ENCODE measurements at regions of chr6 and their contacts with region 1.

Region 1: DNA sequence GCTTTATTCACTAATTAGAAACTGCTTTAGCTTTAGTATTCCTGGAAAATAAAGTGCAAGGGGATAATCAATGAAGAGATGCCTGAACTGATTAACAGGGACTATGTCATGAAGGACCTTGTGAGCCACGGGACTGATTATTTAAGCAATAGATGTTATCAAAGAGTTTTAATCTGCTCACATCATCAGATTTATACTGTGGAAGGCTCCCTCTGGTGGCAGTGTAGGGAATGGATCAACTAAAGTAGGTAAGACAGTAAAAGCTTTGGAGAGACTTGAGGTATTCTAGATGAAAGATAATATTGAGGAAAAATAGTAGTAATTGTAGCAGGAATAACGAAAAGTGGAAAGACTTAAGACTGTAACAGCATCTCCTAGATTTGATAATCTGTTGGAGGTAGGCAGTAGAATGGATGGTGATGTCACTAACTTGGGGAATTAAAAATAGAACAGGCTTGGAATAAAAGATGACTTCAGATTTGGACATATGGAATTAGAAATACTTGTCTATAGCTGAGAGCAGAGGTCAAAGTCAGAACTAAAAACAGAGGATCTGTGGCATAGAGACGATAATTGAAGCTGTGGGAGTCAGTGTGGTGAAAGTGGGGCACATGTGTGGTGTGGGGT is 80.3 kb upstream of the HTR1E start:
- DNase-seq: no peak
- ATAC-seq: no peak

Region 2: GRCh38 chr6:85756982-85757381 is 1100.1 kb before region 1 on chr6:
- intact Hi-C with region 1: loop called in 1 of 2 experiments (anchors 5 kb)
- DNase-seq: no peak
- ATAC-seq: no peak

Region 3: DNA sequence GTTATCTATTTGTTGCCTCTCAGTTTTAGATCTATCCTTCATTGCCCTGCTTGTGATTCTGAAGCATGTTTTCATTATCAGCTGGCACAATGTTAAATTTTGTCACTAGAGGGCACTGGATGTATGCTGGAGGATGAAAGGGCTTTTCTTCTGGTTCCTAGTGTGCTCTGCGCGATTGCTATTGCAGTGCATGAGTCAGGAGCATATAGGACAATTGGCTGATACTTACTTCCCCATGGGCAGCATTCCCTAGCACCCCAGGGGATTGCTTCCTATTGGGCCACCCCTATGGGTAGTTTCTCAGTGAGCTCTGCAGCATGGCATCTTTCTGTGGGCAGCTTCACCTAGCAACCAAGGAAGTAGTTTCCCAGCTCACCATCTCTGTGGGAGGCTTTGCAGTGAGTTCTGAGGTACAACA is 934.0 kb before region 1 on chr6:
- intact Hi-C with region 1: loop called in 1 of 2 experiments (anchors 5 kb)
- DNase-seq: no peak
- ATAC-seq: peak in 1 of 2 donors; percentile 63

Region 4: DNA sequence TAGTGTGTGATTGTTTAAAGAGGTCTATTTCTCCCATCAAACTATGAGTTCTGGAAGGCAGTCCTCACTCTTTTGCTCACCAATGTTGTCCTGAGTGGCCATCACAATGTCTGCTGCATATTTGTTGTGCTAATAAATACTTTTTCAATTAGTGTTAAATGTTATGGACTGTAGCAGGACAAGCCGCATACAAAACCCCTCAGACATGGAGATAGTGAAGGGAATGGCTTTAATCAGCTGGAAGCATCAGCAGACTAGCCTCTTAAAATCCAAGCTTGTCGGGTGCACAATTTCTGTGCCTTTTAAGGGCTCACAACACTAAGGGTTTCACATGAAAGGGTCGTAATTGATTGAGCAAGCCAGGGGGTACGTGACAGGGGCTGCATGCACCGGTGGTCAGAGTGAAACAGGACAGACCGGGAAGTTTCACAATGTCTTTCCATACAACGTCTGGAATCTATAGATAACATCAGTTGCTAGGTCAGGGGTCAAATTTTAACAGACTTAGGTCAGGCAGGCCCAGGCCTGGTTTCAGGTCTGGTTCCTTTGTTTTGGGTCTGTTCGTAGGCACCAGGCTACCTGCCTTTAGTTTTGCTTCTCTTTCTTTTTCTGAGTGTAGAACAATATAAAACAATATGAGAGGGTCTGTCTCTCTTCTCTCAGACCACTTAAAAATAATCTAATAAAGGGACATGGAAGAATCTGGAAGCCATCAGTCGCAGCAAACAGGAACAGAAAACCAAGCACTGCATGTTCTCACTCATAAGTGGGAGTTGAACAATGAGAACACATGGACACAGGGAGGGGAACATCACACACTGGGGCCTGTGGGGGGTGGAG is 247.3 kb before region 1 on chr6:
- intact Hi-C with region 1: no loop called
- DNase-seq: no peak
- ATAC-seq: no peak

Region 5: GRCh38 chr6:87105823-87106222 is 248.8 kb after region 1 on chr6:
- intact Hi-C with region 1: no loop called
- DNase-seq: no peak
- ATAC-seq: no peak

Measured in left cardiac atrium (tissue), 4 donors.